GM23248 (cell line): ENCODE measurements at regions of chr6 and their contacts with region 1.

Region 1: GRCh38 chr6:3251462-3252314 is 7.1 kb upstream of the PSMG4 start:
- DNase-seq: peak; percentile 84
- H3K4me3 ChIP-seq: no peak overlapping the region
- H3K27ac ChIP-seq: no peak overlapping the region
- H3K4me1 ChIP-seq: peaks cover 18% of the 10 kb centered on the region
- H3K27me3 ChIP-seq: no peaks in the 10 kb centered on the region

Region 2: DNA sequence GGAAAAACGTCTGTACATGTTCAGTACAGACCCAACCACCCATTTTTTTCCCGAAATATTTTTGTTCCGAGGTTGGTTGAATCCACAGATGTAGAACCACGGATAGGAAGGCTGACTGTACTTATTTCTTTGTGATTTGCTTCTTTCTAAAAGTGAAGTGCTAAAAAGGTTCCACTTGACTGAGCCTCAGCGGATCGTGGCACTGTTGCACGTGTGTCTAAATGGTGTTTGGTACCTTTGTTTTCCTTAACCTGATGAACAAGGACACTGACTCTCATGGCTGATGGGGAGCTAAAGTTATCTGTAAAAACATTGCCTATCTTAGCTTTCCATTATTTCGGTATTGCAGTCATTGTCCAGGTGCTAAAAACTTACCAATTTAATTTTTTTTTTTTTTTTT is 127.0 kb before region 1 on chr6:
- in situ Hi-C with region 1: loop called (anchors 5 kb)
- DNase-seq: no peak
- H3K4me3 ChIP-seq: no peak overlapping the region
- H3K27ac ChIP-seq: no peak overlapping the region
- H3K4me1 ChIP-seq: no peaks in the 10 kb centered on the region
- H3K27me3 ChIP-seq: no peaks in the 10 kb centered on the region

Region 3: GRCh38 chr6:4018172-4018905 is 766.7 kb after region 1 on chr6:
- in situ Hi-C with region 1: no loop called
- DNase-seq: peak; percentile 98
- H3K4me3 ChIP-seq: peak overlapping the region; percentile 83
- H3K27ac ChIP-seq: peak overlapping the region; percentile 93
- H3K4me1 ChIP-seq: peaks cover 23% of the 10 kb centered on the region
- H3K27me3 ChIP-seq: no peaks in the 10 kb centered on the region

Region 4: DNA sequence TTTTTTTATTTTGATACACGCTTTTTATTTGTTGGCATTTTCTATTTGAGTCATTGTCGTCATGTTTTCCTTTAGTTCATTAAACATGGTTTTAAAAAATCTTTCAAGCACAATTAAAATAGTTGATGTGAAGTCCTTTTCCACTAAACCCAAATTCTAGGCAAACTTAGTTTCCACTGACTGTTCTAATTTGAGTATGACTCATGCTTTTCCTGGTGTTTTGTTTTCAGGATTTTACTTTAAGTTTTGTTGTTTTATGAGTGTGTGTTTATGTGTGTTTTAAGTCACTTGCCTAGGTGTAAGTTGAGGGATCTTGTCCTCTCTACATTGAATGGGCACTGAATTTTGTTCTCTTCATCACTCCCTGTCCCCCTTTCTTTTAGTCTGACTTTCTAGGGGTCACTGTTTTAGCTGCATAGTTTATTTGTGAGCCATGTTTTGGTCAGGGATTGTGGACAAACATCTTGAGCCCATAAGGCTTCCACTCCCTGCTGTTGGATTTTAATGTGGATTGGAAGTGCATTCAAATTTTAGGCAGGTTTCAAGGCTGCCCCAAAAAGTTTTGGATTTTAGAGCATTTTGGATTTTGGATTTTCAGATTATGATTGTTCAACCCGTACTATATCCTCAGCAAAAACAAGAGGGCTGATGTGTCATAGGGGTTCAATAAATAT is 1619.3 kb after region 1 on chr6:
- in situ Hi-C with region 1: no loop called
- DNase-seq: peak; percentile 50
- H3K4me3 ChIP-seq: no peak overlapping the region
- H3K27ac ChIP-seq: no peak overlapping the region
- H3K4me1 ChIP-seq: peaks cover 12% of the 10 kb centered on the region; the same call in 1 of the 2 replicates
- H3K27me3 ChIP-seq: no peaks in the 10 kb centered on the region